ENCODE measurements at regions of chr5 and their contacts with region 1.

Region 1: GRCh38 chr5:142713121-142713706 is 27.3 kb upstream of the FGF1 start:
- DNase-seq: peak; percentile 70 to 93 (median 83)
- ATAC-seq: peak; percentile 95
- H3K4me3 ChIP-seq: peak overlapping the region; percentile 61 to 82
- H3K4me3 Mint-ChIP-seq: peak overlapping the region; percentile 76
- H3K27ac ChIP-seq: peak overlapping the region in 1 of 2 experiments; percentile 49
- H3K27ac Mint-ChIP-seq: peak overlapping the region; percentile 45
- H3K4me1 ChIP-seq: peaks cover 4% of the 10 kb centered on the region
- H3K4me1 Mint-ChIP-seq: peaks cover 18% of the 10 kb centered on the region
- H3K27me3 ChIP-seq: no peaks in the 10 kb centered on the region
- H3K27me3 Mint-ChIP-seq: no peaks in the 10 kb centered on the region
- CTCF ChIP-seq: peak; percentile 98

Region 2: DNA sequence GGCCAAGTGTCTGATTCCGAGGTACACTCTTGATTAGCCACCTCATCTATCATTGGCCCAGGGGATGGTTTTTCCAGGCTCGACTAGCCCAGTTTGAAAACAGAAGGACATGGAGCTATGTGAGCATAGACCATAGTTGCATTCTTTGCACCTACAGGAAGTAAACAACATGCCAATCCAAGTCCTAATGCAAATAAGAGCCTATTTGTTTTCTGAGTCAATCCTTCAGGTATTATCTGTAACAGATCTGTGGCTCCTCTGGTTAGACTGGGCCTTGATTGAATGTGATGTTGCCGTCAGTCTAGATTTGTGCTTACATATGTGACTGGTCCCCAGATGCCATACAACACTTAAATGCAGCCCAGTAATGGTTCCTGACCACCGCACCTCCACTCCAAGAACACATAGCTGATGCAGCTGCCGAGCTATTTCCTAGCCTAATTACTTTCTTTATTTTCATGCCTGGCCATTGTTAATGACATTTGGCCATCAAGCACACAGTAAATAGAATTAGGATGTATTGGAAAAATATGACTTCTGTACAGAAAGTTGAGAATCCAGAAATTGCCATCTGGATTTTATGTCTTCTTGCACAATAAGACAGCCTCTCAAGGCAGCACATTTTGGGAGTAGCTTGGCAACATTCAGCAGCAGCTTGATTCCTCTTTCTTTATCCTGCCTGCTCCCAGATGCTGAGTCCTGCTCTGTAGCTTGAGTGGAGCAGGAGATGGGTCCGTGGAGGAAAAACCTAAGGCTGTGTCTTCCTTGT is 27.4 kb after region 1 on chr5:
- CTCF ChIA-PET with region 1: interaction called, 103 read pairs
- POLR2A ChIA-PET with region 1: no interaction called
- intact Hi-C with region 1: no loop called
- DNase-seq: no peak
- ATAC-seq: no peak
- H3K4me3 ChIP-seq: no peak overlapping the region
- H3K4me3 Mint-ChIP-seq: no peak overlapping the region
- H3K27ac ChIP-seq: no peak overlapping the region
- H3K27ac Mint-ChIP-seq: no peak overlapping the region
- H3K4me1 ChIP-seq: no peaks in the 10 kb centered on the region
- H3K4me1 Mint-ChIP-seq: peaks cover 7% of the 10 kb centered on the region
- H3K27me3 ChIP-seq: no peaks in the 10 kb centered on the region
- H3K27me3 Mint-ChIP-seq: peaks cover 6% of the 10 kb centered on the region
- CTCF ChIP-seq: no peak

Region 3: DNA sequence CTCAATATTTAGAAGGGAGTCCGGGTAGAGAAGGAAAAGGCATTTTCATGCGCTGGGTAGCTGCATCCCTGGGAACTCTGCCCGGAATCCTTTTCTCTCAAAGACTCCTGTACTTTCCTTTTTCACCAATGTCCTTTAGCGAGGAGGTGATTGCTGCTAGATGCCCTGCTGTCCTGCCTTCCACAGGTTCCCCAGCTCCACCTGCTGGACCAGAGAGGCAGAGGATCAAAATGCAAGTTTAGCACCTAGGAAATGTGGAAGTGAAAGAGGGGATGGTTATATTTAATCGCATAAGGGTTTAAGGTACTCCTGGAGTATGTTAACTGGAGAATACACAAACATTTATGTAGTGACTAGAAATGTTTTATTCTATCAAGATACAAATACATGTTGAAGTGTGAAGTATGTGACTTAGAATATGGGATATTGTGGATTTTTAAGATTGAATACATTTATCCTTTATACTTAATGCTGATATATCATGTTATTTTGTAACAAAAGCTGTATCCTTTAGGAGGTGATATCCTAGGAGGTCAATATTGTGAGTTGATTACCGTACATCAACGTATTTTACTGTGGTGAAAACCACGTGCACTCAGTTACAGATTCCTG is 202.7 kb after region 1 on chr5:
- CTCF ChIA-PET with region 1: interaction called, 11 read pairs
- POLR2A ChIA-PET with region 1: no interaction called
- intact Hi-C with region 1: no loop called
- DNase-seq: peak in 2 of 9 experiments; percentile 20 to 25
- ATAC-seq: no peak
- H3K4me3 ChIP-seq: no peak overlapping the region
- H3K4me3 Mint-ChIP-seq: no peak overlapping the region
- H3K27ac ChIP-seq: no peak overlapping the region
- H3K27ac Mint-ChIP-seq: no peak overlapping the region
- H3K4me1 ChIP-seq: no peaks in the 10 kb centered on the region
- H3K4me1 Mint-ChIP-seq: no peaks in the 10 kb centered on the region
- H3K27me3 ChIP-seq: no peaks in the 10 kb centered on the region
- H3K27me3 Mint-ChIP-seq: no peaks in the 10 kb centered on the region
- CTCF ChIP-seq: no peak

Region 4: DNA sequence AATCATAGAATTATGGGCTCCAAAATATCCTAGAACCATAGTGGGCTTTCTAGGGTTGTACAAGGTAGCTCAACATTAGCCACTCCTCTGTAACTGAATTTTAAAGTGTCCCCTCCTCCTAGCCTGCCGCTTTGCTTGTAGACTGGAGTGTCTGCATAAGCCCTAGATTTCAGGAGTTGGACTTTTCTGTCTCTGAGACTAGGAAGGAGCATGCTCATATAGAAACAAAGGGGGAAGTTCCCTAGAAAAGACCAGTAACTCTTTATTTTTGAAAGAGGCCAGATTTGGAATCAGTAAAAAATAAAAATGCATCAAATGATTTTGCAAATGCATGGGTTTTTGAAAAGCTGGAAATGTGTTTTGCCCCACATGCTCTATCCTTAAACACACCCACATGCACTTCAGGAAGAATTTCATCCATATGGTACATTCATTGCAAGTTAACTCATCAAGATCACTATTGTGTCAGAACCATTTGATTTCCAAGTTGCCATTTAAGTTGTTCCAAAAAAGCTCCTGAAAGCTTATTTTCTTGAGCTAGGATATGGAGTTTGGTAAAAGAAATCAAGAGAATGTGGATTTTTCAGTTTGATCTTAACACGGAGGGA is 811.2 kb after region 1 on chr5:
- CTCF ChIA-PET with region 1: no interaction called
- POLR2A ChIA-PET with region 1: no interaction called
- intact Hi-C with region 1: no loop called
- DNase-seq: no peak
- ATAC-seq: no peak
- H3K4me3 ChIP-seq: no peak overlapping the region
- H3K4me3 Mint-ChIP-seq: no peak overlapping the region
- H3K27ac ChIP-seq: no peak overlapping the region
- H3K27ac Mint-ChIP-seq: no peak overlapping the region
- H3K4me1 ChIP-seq: no peaks in the 10 kb centered on the region
- H3K4me1 Mint-ChIP-seq: no peaks in the 10 kb centered on the region
- H3K27me3 ChIP-seq: no peaks in the 10 kb centered on the region
- H3K27me3 Mint-ChIP-seq: no peaks in the 10 kb centered on the region
- CTCF ChIP-seq: no peak

Measured in CD8-positive, alpha-beta T cell (primary cell).